H1 (cell line): ENCODE measurements at regions of chr12 and their contacts with region 1.

Region 1: GRCh38 chr12:105705765-105706164 is 375.3 kb downstream of the C12orf75 start:
- DNase-seq: peak in 1 of 2 experiments; percentile 78
- H3K4me3 ChIP-seq: no peak overlapping the region
- H3K27ac ChIP-seq: no peak overlapping the region
- H3K4me1 ChIP-seq: peaks cover 0 to 13% (median 6%) of the 10 kb centered on the region in 4 experiments; a peak in 5 of 7 replicates
- H3K27me3 ChIP-seq: peaks cover 0 to 2% (median under 1%) of the 10 kb centered on the region in 4 experiments; a peak in 1 of 7 replicates
- CTCF ChIP-seq: peak in 2 of 3 experiments; percentile 62 to 71; a peak in 2 of 4 replicates
- EP300 ChIP-seq: no peak
- POLR2A ChIP-seq: no peak
- RAD21 ChIP-seq: peak; percentile 65 to 72

Region 2: GRCh38 chr12:105420659-105421240 is 285.0 kb before region 1 on chr12:
- CTCF ChIA-PET with region 1: interaction called, 29 read pairs
- POLR2A ChIA-PET with region 1: no interaction called
- DNase-seq: peak in 1 of 2 experiments; percentile 83
- H3K4me3 ChIP-seq: no peak overlapping the region
- H3K27ac ChIP-seq: no peak overlapping the region
- H3K4me1 ChIP-seq: no peaks in the 10 kb centered on the region
- H3K27me3 ChIP-seq: no peaks in the 10 kb centered on the region
- CTCF ChIP-seq: peak; percentile 51 to 90 (median 82)
- EP300 ChIP-seq: no peak
- POLR2A ChIP-seq: no peak
- RAD21 ChIP-seq: peak; percentile 100

Region 3: DNA sequence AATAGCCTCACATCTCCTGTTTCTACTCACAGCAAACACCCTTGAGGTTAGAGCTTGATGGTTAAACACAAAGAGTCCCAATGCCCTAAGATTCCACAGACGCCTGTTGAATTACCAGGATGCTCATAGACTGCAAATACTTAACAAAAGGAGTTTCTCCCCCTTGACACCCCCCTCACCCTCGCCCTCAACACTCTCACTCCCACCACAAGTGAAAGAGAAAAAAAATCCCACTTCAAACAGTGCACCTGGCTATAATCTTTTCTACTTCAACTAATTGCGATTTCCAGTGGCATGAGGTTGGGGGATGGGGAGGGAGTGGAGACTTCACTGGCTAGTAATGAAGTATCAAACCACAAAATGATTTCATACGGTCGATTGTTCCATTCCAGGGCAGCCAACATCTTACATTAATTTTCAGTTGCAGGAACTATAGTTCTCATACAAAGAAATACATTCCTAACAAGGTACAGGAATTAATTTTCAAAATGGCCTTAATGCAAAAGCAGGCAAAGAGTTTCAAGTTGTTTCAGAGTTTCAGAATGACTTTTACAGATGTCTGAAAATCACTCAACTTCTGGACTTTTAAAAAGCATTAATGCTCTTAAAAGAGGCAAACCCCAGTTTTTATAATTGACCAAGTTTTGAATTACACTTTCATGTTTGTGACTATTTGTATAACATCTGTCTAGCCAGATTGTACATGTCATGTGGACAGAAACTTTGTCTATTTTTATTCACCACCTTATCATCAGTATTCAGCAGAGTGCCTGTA is 15.5 kb after region 1 on chr12:
- CTCF ChIA-PET with region 1: interaction called, 33 read pairs
- POLR2A ChIA-PET with region 1: no interaction called
- DNase-seq: no peak
- H3K4me3 ChIP-seq: no peak overlapping the region
- H3K27ac ChIP-seq: no peak overlapping the region
- H3K4me1 ChIP-seq: peaks cover 0 to 10% (median 1%) of the 10 kb centered on the region in 4 experiments; a peak in 2 of 7 replicates
- H3K27me3 ChIP-seq: no peaks in the 10 kb centered on the region
- CTCF ChIP-seq: no peak
- EP300 ChIP-seq: no peak
- POLR2A ChIP-seq: no peak
- RAD21 ChIP-seq: no peak

Region 4: DNA sequence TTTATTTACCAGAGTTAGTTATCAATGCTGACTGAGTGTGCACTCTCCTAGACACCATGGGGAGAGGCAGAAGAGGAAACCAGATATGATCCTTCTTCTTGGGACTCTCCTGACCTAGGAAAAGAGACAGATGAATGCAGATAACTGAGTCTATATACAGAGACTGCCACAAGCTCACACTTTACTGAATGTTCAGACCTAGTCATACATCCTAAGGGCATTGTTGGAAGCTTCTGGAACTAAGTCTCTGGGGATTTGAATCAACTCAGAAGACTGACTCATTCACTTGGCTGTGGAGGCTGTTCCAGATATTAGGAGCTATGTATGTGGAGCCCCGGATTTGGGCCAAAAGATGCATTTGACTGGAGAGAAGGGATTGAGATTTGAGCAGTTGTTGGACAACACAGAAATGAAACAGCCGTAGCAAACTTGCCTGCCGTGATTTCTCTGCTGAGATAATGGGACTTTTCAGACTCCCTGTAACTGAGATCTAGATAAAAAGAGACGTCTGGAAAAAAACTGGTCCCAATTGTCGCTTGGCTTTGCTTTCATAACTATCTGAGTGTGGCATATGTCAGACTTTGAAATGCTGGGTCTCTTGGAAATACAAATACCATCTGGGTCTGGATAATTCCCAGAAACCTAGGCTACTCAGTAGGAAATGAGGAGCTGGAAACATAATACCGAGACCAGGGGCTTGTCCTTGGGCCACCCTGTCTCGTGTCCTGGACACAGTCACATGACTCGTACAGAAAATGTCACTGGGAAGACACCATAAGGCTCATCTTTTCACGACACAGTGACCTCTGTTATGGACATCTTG is 36.2 kb after region 1 on chr12:
- CTCF ChIA-PET with region 1: interaction called, 27 read pairs
- POLR2A ChIA-PET with region 1: no interaction called
- DNase-seq: no peak
- H3K4me3 ChIP-seq: no peak overlapping the region
- H3K27ac ChIP-seq: no peak overlapping the region
- H3K4me1 ChIP-seq: peaks cover 0 to 14% (median 13%) of the 10 kb centered on the region in 4 experiments; a peak in 5 of 7 replicates
- H3K27me3 ChIP-seq: no peaks in the 10 kb centered on the region
- CTCF ChIP-seq: no peak
- EP300 ChIP-seq: no peak
- POLR2A ChIP-seq: no peak
- RAD21 ChIP-seq: no peak

Region 5: GRCh38 chr12:106136263-106136662 is 430.5 kb after region 1 on chr12:
- CTCF ChIA-PET with region 1: interaction called, 79 read pairs
- POLR2A ChIA-PET with region 1: interaction called, 5 read pairs
- DNase-seq: peak; percentile 79 to 96
- H3K4me3 ChIP-seq: peak overlapping the region in 3 of 4 experiments; percentile 14 to 78 (median 29); a peak in 5 of 8 replicates
- H3K27ac ChIP-seq: no peak overlapping the region
- H3K4me1 ChIP-seq: peaks cover 32 to 59% (median 42%) of the 10 kb centered on the region in 4 experiments
- H3K27me3 ChIP-seq: peaks cover 0 to 7% (median 0%) of the 10 kb centered on the region in 4 experiments; a peak in 1 of 7 replicates
- CTCF ChIP-seq: peak; percentile 50 to 73 (median 70)
- EP300 ChIP-seq: no peak
- POLR2A ChIP-seq: peak in 1 of 2 experiments; percentile 41; a peak in 1 of 3 replicates
- RAD21 ChIP-seq: peak; percentile 95 to 97

Region 6: GRCh38 chr12:106841510-106842302 is 1135.9 kb after region 1 on chr12:
- CTCF ChIA-PET with region 1: no interaction called
- POLR2A ChIA-PET with region 1: no interaction called
- DNase-seq: no peak
- H3K4me3 ChIP-seq: no peak overlapping the region
- H3K27ac ChIP-seq: no peak overlapping the region
- H3K4me1 ChIP-seq: peaks cover 2 to 8% (median 4%) of the 10 kb centered on the region in 4 experiments; a peak in 4 of 7 replicates
- H3K27me3 ChIP-seq: no peaks in the 10 kb centered on the region
- CTCF ChIP-seq: peak in 2 of 3 experiments; percentile 40 to 50; a peak in 2 of 4 replicates
- EP300 ChIP-seq: no peak
- POLR2A ChIP-seq: no peak
- RAD21 ChIP-seq: peak; percentile 67 to 74